ENCODE measurements at regions of chr2 and their contacts with region 1.

Region 1: GRCh38 chr2:30115141-30115980 is 31.4 kb upstream of the YPEL5 start:
- DNase-seq: peak; percentile 70 to 94 (median 86)
- H3K4me3 ChIP-seq: peak overlapping the region in 2 of 59 donors; percentile 3 to 15
- H3K27ac ChIP-seq: peak overlapping the region in 56 of 59 donors; percentile 5 to 89 (median 74)
- H3K27me3 ChIP-seq: no peaks in the 10 kb centered on the region
- CTCF ChIP-seq: peak; percentile 68 to 98 (median 95)

Region 2: GRCh38 chr2:29987146-29987545 is 128.2 kb before region 1 on chr2:
- intact Hi-C with region 1: no loop called
- DNase-seq: no peak
- H3K4me3 ChIP-seq: no peak overlapping the region
- H3K27ac ChIP-seq: no peak overlapping the region
- H3K27me3 ChIP-seq: peaks cover 0 to 8% (median 0%) of the 10 kb centered on the region in 45 donors
- CTCF ChIP-seq: no peak

Region 3: DNA sequence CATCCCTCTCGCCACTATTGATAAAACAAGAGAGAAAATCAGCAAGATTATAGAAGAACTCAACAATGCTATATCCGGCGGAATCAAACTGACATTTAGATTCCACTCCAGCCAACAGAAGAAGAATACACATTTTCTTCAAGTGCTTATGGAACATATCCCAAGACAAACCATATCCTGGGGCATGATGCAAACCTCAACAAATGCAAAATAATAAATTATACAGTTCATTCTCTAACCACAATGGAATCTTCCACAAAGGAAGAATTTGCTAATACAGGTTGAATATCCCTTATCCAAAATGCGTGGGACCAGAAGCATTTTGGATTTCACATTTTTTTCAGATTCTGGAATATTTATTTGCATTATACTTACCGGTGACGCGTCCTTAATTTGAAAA is 20.0 kb before region 1 on chr2:
- intact Hi-C with region 1: loop called in 1 of 2 experiments (anchors 1 kb)
- DNase-seq: no peak
- H3K4me3 ChIP-seq: no peak overlapping the region
- H3K27ac ChIP-seq: no peak overlapping the region
- H3K27me3 ChIP-seq: peaks cover 0 to 3% (median 0%) of the 10 kb centered on the region in 45 donors
- CTCF ChIP-seq: no peak

Measured in dorsolateral prefrontal cortex (tissue), 120 donors.